Activated CD4-positive, alpha-beta memory T cell treated with anti-CD3 and anti-CD28 coated beads, Interleukin-2, amount 10 ng/mL, durations not matched to agents 7 days and 5 days (primary cell): ENCODE measurements at regions of chr16 and their contacts with region 1.

Region 1: DNA sequence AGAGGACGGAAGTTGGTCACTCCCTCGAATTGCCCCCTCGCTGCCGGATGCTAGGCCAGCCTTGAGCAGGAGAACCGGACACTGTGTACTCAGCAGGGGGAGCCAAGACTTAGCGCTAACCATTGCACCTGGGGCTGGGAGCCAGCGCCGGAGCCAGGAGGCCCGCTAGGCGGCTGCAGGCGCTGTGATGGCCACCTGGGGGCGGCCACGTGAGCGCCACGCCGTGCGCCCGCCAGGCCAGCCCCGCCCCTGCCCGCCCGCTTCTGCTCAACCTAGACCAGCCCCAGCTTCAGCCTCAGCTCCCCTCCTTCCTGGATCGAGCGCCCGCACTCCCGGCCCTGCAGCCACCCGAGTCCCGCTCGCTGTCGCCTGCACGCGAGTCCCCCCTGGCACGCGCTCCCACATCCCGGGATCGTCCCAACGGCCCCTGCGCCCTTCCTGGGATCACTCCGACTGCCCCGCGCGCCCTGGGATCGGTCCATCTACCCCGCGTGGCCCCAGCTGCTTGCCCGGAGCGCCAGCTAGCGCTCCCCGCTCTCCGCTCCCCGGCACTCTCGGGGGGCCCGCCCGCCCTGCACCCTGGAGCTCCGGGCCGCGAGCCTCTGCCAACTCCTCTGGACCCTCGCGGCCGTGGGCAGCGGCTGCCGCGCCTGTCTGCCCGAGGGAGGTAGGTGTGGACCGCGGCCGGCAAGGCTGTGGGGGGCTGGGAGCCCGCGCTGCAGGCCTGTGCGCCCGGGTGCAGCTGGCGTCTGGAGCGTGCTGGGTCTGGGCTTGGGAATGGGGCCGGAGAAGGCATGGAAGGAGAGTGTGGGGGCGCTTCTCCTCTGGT is at the start of gene EEF2K:
- DNase-seq: peak; percentile 89
- H3K4me3 Mint-ChIP-seq: peak within 1 kb of the TSS; percentile 99
- H3K27ac Mint-ChIP-seq: peak within 1 kb of the TSS; percentile 83
- H3K4me1 Mint-ChIP-seq: peaks cover 44% of the 10 kb centered on the region
- H3K27me3 Mint-ChIP-seq: no peaks in the 10 kb centered on the region
- total RNA-seq, gene EEF2K: 22.1 to 24.8 TPM

Region 2: DNA sequence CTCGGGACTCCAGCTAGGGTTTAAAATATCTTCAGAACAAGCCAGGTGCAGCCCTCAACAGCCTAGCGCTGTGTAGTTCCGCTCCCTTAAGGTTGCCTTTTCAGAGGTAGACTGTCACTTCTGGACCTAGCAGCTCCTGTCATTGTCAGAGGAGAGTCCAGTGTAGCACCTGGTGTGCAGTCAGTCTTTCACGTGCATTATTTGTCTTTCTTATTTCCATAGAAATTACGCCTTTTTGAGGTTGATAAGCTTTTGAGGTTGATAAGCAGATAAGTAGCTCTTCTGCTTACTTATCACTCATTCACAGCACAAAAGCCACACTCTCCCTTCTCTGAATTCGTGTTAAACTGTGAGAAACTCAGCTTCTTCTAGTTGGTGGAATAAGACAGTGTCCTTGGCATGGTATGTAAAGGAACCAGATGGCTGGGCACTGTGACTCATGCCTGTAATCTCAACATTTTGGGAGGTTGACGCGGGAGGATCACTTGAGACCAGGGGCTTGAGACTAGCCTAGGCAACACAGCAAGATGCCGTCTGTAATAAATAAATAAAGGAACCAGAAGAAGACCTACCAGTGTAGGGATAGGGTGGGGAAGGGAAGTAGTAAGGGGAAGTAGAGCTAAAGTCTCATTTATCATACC is 10.1 kb after region 1 on chr16:
- CTCF ChIA-PET with region 1: interaction called, 13 read pairs
- POLR2A ChIA-PET with region 1: interaction called, 12 read pairs
- DNase-seq: no peak
- H3K4me3 Mint-ChIP-seq: no peak overlapping the region
- H3K27ac Mint-ChIP-seq: peak overlapping the region; percentile 8
- H3K4me1 Mint-ChIP-seq: peaks cover 22% of the 10 kb centered on the region
- H3K27me3 Mint-ChIP-seq: no peaks in the 10 kb centered on the region